ENCODE measurements at regions of chr10 and their contacts with region 1.

Region 1: DNA sequence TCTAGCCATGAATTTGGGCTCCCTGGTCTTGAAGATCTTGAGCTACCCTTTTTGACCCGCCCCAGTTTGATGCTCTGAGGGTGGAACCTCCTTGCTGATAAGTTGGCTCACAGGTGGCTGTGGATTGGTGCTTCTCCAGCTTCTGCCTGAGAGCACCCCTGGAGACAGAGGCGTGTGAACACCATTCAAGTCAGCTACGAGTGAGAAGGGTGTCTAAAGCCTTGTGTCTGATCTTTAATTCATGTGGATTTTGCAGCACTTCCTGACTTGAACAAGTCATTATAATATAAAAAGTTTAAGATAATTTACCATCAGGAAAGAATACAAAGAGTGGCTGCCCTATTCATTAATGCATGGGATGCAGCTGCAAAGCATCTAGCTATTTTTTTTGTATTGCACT is 37.7 kb upstream of the GOLGA7B start:
- DNase-seq: no peak
- H3K4me3 ChIP-seq: no peak overlapping the region
- H3K27ac ChIP-seq: no peak overlapping the region
- H3K4me1 ChIP-seq: no peaks in the 10 kb centered on the region
- H3K27me3 ChIP-seq: no peaks in the 10 kb centered on the region
- CTCF ChIP-seq: no peak
- EP300 ChIP-seq: no peak
- POLR2A ChIP-seq: no peak

Region 2: GRCh38 chr10:97764519-97764931 is 47.4 kb before region 1 on chr10:
- in situ Hi-C with region 1: no loop called
- intact Hi-C with region 1: loop called (anchors 1 kb)
- DNase-seq: no peak
- H3K4me3 ChIP-seq: no peak overlapping the region
- H3K27ac ChIP-seq: no peak overlapping the region
- H3K4me1 ChIP-seq: no peaks in the 10 kb centered on the region
- H3K27me3 ChIP-seq: peaks cover 6% of the 10 kb centered on the region
- CTCF ChIP-seq: no peak
- EP300 ChIP-seq: no peak
- POLR2A ChIP-seq: no peak

Region 3: GRCh38 chr10:97882142-97883091 is 70.5 kb after region 1 on chr10:
- in situ Hi-C with region 1: no loop called
- intact Hi-C with region 1: no loop called
- DNase-seq: no peak
- H3K4me3 ChIP-seq: no peak overlapping the region
- H3K27ac ChIP-seq: no peak overlapping the region
- H3K4me1 ChIP-seq: no peaks in the 10 kb centered on the region
- H3K27me3 ChIP-seq: no peaks in the 10 kb centered on the region
- CTCF ChIP-seq: no peak
- EP300 ChIP-seq: no peak
- POLR2A ChIP-seq: no peak